WTC11 (cell line): ENCODE measurements at regions of chr3 and their contacts with region 1.

Region 1: DNA sequence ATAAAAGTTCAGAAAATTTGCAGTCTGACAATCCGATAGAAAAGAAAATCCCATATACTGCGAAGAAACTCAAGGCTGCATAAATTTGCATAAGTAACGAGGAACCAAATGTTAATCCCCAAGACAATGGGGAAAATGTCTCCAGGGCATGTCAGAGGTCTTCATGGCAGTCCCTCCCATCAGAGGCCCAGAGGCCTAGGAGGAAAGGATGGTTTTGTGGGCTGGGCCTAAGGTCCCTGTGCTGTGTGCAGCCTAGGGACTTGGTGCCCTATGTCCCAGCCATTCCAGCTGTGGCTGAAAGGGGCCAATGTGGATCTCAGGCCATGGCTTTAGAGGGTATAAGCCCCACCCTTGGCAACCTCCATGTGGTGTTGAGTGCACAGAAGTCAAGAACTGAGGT is 21.3 kb upstream of the CCR4 start:
- DNase-seq: no peak
- ATAC-seq: no peak
- H3K4me3 Mint-ChIP-seq: no peak overlapping the region
- H3K27ac Mint-ChIP-seq: no peak overlapping the region
- H3K4me1 Mint-ChIP-seq: peaks cover 18% of the 10 kb centered on the region
- H3K27me3 Mint-ChIP-seq: peaks cover 10% of the 10 kb centered on the region
- CTCF ChIP-seq: no peak

Region 2: DNA sequence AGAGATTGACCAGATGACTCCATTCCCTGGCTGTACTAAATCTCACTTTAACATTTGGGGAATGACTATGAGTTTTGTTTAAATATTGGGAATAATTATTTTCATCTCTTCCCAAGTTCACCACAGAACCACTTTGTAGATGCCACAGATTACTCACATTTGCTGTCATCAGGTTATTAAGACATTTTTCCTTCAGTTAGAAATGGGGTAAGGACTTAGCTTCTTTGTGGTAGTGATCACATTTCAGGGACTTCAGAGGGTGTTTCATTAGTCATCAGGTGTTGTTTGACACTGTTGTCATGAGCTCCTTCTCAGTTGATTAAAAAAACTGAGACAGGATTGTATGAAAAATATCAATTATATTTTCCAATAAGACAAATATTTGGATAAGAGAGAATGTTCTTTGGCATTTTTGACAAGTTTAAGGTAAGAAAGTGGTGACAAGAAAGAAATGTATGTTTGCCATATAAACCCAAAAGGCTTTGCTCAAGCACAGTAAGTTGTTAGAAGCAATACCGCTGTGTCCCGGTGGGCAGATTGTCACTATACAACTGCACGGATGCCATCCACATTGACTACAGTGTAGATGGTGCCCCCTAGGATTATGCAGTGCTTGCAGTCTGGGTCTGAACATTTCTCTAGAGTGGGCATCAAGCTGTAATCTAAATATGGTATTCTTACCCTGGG is 369.4 kb after region 1 on chr3:
- CTCF ChIA-PET with region 1: no interaction called
- POLR2A ChIA-PET with region 1: interaction called, 11 read pairs
- DNase-seq: no peak
- ATAC-seq: no peak
- H3K4me3 Mint-ChIP-seq: no peak overlapping the region
- H3K27ac Mint-ChIP-seq: no peak overlapping the region
- H3K4me1 Mint-ChIP-seq: no peaks in the 10 kb centered on the region
- H3K27me3 Mint-ChIP-seq: no peaks in the 10 kb centered on the region
- CTCF ChIP-seq: no peak